ENCODE measurements at regions of chr20 and their contacts with region 1.

Region 1: DNA sequence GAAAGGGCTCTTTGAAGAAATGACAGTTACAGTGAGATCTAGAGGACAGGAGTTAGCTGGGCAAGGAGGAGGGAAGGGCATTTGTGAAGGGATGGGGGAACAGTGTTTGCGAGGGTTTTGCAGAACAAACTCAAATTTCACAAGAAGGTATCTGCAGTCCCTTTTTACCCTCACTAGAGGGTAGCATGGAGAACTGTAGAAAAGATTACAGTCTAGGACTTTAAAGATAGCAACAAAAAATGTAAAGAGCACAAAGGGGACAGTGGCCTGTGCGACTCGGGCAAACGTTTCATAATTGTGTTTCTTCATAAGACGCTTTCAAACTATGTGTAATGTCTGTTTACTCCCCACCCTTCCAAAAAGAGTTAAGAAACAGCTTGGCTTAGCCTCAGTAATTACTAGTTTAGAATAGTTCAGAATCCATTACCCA is 21.2 kb upstream of the ASXL1 start:
- DNase-seq: no peak
- ATAC-seq: no peak
- H3K4me3 Mint-ChIP-seq: no peak overlapping the region
- H3K27ac Mint-ChIP-seq: peak overlapping the region; percentile 65
- H3K4me1 Mint-ChIP-seq: peaks cover 40% of the 10 kb centered on the region
- H3K27me3 Mint-ChIP-seq: no peaks in the 10 kb centered on the region
- CTCF ChIP-seq: peak; percentile 67

Region 2: DNA sequence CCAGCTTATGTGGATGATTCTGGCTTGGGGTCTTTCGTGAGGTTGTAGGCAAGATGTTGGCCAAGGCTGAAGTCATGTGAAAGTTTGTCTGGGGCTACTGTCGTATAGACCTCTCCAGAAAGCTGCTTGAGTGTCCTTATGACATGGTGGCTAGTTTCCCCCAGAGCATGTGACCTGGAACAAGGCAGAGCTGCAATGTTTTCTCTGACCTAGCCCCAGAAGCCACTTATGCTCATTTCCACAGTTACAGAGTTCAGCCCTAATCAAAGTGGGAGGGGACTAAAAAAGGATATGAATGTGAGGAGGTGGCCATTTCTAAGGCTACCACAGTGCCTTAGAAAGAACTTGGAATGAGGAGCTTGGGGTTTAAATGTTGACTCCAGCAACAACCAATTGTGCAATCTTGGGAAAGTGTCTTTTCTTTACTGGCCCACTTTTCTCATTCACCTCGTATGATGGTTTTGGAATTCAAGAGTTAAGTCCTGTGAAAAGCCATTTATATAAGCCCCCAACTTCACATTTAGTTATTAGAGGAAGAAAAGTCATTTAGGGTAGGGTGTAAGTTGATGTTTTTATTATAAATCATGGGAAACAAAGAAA is 15.3 kb after region 1 on chr20:
- CTCF ChIA-PET with region 1: interaction called, 10 read pairs
- POLR2A ChIA-PET with region 1: interaction called, 6 read pairs
- intact Hi-C with region 1: no loop called
- DNase-seq: no peak
- ATAC-seq: no peak
- H3K4me3 Mint-ChIP-seq: no peak overlapping the region
- H3K27ac Mint-ChIP-seq: peak overlapping the region; percentile 15
- H3K4me1 Mint-ChIP-seq: peaks cover 31% of the 10 kb centered on the region
- H3K27me3 Mint-ChIP-seq: no peaks in the 10 kb centered on the region
- CTCF ChIP-seq: no peak

Region 3: GRCh38 chr20:32357869-32358631 is 21.1 kb after region 1 on chr20 and contains the start of gene ASXL1:
- CTCF ChIA-PET with region 1: interaction called, 4 read pairs
- POLR2A ChIA-PET with region 1: interaction called, 15 read pairs
- intact Hi-C with region 1: no loop called
- DNase-seq: peak; percentile 97
- ATAC-seq: peak; percentile 85
- H3K4me3 Mint-ChIP-seq: peak within 1 kb of the TSS; percentile 96
- H3K27ac Mint-ChIP-seq: peak within 1 kb of the TSS; percentile 100
- H3K4me1 Mint-ChIP-seq: peaks cover 59% of the 10 kb centered on the region
- H3K27me3 Mint-ChIP-seq: no peaks in the 10 kb centered on the region
- CTCF ChIP-seq: no peak
- total RNA-seq, gene ASXL1: 129 to 137 TPM

Region 4: DNA sequence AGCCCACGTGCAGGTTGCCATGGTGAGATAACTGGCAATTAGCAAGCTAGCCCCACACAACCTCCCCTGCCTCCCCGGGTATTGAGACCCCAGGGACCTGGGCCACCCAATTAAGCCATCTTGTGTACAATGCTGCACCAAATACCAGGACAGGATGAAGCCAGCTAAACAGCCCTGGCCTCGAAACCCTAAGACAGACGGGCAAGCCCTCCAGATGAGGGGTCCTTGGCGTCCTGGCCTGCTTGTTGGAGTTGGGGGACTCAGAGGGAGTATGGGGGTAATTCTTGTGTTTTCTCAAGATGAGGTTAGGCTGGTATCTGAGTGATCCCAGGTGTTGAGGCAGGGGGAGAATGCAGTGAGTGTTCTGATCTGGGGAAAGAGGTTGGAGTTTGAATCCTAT is 474.0 kb after region 1 on chr20:
- CTCF ChIA-PET with region 1: no interaction called
- POLR2A ChIA-PET with region 1: no interaction called
- intact Hi-C with region 1: no loop called
- DNase-seq: no peak
- ATAC-seq: no peak
- H3K4me3 Mint-ChIP-seq: no peak overlapping the region
- H3K27ac Mint-ChIP-seq: no peak overlapping the region
- H3K4me1 Mint-ChIP-seq: no peaks in the 10 kb centered on the region
- H3K27me3 Mint-ChIP-seq: no peaks in the 10 kb centered on the region
- CTCF ChIP-seq: no peak